KBM-7 (cell line): ENCODE measurements at regions of chr5 and their contacts with region 1.

Region 1: DNA sequence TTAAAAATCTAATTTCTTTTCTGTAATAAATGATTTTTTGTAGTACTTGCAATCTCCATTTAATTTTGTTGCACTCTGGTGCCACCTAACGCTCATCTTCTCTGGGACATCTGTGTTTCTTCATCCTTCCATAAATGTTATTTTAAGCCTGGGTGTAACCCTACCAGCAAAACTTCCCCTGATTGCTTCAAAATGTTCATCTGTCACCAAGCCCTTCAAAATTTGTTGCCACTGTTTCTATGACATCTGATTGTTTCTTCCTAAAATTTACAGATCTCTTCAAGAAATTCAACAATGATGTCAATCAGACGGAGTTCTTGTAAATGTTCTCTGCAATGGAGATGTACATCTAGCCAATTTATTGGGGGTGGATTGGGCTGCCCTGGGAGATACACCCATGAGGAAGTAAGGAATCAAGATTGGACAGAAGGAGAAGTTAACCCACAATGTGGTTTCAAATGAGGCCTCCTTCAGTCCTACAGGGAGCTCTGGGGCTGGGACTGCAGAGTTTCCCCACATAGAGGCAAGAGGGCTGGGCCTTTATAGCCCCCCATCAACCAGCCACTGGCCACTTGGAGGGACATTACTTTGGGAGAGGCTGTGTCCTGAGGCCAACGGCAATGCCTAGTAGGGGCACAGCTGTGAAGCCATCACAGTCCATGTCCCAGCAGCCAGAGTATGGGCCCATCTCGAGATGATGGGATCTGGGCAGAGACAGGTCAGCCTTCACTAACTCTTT is 23.3 kb downstream of the MCTP1 start:
- DNase-seq: peak; percentile 66

Region 2: GRCh38 chr5:94968507-94969095 is 293.0 kb before region 1 on chr5:
- in situ Hi-C with region 1: loop called (anchors 25 kb)
- DNase-seq: peak; percentile 87

Region 3: DNA sequence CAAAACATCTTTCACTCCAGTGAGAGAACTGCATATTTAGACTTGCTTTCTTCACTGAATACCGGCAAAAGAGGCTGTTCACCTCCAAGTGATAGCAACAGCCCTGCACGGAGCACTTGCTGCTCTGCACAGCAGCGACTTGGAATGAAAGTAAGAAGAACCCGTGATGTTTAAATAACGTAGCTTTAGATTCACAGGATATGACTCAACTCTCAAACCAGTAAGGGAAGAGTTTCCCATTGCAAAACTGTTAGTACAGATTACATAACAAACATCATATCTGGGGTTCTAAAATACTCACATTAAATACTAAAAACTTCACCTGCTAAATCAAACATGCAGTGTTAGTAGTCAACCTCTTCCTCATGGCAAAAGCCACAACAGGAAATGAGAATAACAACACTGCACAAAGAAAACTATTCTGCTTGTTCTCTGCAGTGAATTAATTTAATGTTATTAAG is 180.1 kb before region 1 on chr5:
- in situ Hi-C with region 1: no loop called
- DNase-seq: peak; percentile 63